ENCODE measurements at regions of chr3 and their contacts with region 1.

Region 1: GRCh38 chr3:102229062-102229655 is 205.7 kb upstream of the ZPLD1 start:
- DNase-seq: peak; percentile 87
- ATAC-seq: peak; percentile 53
- H3K4me3 ChIP-seq: no peak overlapping the region
- H3K4me3 Mint-ChIP-seq: no peak overlapping the region
- H3K27ac ChIP-seq: no peak overlapping the region
- H3K27ac Mint-ChIP-seq: no peak overlapping the region
- H3K4me1 ChIP-seq: peaks cover 22 to 28% of the 10 kb centered on the region in 2 donors
- H3K4me1 Mint-ChIP-seq: peaks cover 36% of the 10 kb centered on the region
- H3K27me3 ChIP-seq: no peaks in the 10 kb centered on the region
- H3K27me3 Mint-ChIP-seq: peaks cover 3% of the 10 kb centered on the region
- CTCF ChIP-seq: peak; percentile 90

Region 2: GRCh38 chr3:101803173-101803782 is 425.9 kb before region 1 on chr3:
- CTCF ChIA-PET with region 1: interaction called, 1,306 read pairs
- POLR2A ChIA-PET with region 1: no interaction called
- intact Hi-C with region 1: no loop called
- DNase-seq: peak; percentile 75
- ATAC-seq: peak; percentile 99
- H3K4me3 ChIP-seq: no peak overlapping the region
- H3K4me3 Mint-ChIP-seq: no peak overlapping the region
- H3K27ac ChIP-seq: no peak overlapping the region
- H3K27ac Mint-ChIP-seq: no peak overlapping the region
- H3K4me1 ChIP-seq: no peaks in the 10 kb centered on the region
- H3K4me1 Mint-ChIP-seq: peaks cover 4% of the 10 kb centered on the region
- H3K27me3 ChIP-seq: no peaks in the 10 kb centered on the region
- H3K27me3 Mint-ChIP-seq: no peaks in the 10 kb centered on the region
- CTCF ChIP-seq: peak; percentile 90

Region 3: DNA sequence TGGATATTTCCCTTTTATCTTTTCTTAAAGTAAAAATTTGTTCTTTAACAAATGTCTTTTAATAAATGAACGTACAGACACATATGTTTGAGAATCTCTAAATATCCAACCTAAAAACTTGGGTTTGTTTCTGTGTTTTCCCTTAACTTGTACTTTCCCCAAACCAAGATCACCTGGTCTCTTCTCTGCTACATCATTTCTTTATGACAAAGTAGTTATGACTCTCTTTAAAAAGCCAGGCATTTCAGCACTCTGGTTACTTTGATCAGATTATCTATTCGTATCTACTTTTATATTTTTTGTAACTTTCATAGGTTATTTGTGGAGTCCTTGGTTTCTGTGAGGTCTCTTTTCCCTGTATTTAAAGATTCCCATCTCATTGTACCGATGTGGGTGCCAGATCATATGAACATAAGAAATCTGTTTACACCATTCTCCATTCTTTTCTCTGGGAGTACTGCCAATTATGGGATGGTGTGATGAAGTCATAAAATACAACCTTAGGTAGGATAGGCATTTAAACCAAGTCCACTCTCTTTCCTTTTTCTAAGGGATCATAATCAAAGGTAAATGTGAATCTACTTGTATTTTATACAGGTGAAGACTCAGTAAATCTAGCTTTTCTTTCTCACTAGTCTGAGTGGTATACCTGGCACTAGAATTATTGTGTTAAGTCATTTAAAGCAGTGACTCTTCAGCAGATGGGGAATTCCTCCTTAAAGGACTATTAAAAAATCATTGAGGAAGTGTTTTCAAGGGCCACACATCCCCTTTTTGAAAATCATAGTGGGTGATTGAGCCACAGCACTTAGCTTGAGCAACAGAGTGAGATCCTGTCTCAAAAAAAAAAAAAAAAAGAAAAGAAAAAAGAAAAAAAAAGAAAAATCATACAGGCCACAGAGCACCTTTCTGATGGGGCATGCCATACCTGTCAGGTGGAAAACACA is 392.2 kb before region 1 on chr3:
- CTCF ChIA-PET with region 1: interaction called, 10 read pairs
- POLR2A ChIA-PET with region 1: no interaction called
- intact Hi-C with region 1: no loop called
- DNase-seq: peak; percentile 77
- ATAC-seq: peak; percentile 68
- H3K4me3 ChIP-seq: peak overlapping the region in 2 of 5 experiments; percentile 2 to 14
- H3K4me3 Mint-ChIP-seq: peak overlapping the region; percentile 73
- H3K27ac ChIP-seq: peak overlapping the region; percentile 19 to 49
- H3K27ac Mint-ChIP-seq: peak overlapping the region; percentile 28
- H3K4me1 ChIP-seq: peaks cover 55 to 59% of the 10 kb centered on the region in 2 donors
- H3K4me1 Mint-ChIP-seq: peaks cover 84% of the 10 kb centered on the region
- H3K27me3 ChIP-seq: no peaks in the 10 kb centered on the region
- H3K27me3 Mint-ChIP-seq: no peaks in the 10 kb centered on the region
- CTCF ChIP-seq: no peak

Region 4: DNA sequence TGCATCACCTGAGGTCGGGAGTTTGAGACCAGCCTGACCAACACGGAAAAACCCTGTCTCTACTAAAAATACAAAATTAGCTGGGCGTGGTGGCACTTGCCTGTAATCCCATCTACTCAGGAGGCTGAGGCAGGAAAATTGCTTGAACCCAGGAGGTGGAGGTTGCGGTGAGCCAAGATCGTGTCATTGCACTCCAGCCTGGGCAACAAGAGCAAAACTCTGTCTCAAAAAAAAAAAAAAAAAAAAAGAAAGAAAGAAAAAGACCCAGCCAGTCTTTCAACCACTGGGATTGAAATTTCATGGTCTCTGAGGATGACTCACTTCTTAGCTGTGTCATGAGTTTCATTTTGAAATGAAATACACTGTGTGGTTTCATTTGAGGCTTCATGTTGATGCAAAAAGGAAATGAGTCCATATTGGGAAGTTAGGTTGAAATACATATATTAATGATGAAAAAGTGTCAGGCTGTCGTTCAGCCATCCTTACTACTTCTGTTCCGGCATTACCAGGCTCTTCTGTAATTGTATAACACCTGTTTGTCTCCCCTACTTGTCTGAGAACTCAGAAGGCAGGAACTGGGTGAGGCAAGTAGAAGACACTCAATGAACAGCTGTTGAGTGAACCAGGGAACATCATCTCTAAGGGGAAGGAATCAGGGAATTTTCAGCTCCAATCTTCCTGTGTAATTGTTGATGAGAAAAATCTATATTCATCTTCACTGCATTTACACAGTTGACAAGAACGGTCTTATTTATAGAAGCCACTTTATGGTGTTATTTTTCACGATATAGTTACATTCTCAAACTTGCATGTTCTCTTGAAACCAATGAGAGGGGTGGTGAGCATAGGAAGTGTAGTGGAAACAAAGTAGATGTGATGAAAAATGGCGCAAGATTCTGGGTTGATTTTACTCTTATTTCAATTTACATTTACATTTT is 292.5 kb before region 1 on chr3:
- CTCF ChIA-PET with region 1: interaction called, 11 read pairs
- POLR2A ChIA-PET with region 1: no interaction called
- intact Hi-C with region 1: loop called (anchors 5 kb)
- DNase-seq: peak; percentile 82
- ATAC-seq: peak; percentile 86
- H3K4me3 ChIP-seq: peak overlapping the region in 2 of 5 experiments; percentile 24 to 32
- H3K4me3 Mint-ChIP-seq: peak overlapping the region; percentile 74
- H3K27ac ChIP-seq: peak overlapping the region; percentile 56
- H3K27ac Mint-ChIP-seq: peak overlapping the region; percentile 90
- H3K4me1 ChIP-seq: peaks cover 56 to 64% of the 10 kb centered on the region in 2 donors
- H3K4me1 Mint-ChIP-seq: peaks cover 33% of the 10 kb centered on the region
- H3K27me3 ChIP-seq: no peaks in the 10 kb centered on the region
- H3K27me3 Mint-ChIP-seq: no peaks in the 10 kb centered on the region
- CTCF ChIP-seq: no peak

Region 5: DNA sequence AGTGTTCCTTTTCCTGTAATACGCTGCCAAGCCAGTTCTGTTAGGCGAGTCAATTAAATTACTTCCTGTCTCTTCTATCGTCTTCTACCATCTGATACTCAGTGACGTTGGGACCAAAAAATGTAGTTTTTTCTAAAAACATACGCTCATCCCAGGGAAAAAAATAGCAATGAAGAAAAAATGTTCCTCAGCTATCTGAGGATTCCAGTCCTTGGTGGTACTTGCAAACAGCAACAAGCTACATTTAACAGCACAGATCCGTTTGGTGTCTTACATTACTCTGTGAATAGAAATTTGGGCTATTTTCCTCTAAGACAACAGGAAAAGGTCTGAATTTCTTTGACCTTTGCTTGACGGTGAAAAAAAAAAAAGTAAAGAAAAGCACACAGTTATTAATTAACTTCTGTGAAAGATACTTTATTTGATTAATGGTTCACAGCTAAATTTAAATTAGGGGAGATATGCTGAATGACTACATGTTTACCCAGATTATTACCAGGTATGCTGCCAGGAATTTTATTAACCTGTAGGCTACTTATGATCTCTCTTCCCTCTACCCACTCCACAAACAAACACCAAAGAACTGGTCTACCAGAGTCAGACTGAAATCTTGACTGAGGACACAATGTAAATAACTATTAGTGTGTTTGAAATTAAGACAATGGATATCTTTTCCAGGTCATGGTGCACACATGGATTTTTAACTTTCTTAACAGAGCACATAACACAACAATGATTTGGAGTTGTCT is 48.7 kb before region 1 on chr3:
- CTCF ChIA-PET with region 1: interaction called, 14 read pairs
- POLR2A ChIA-PET with region 1: no interaction called
- intact Hi-C with region 1: no loop called
- DNase-seq: peak; percentile 38
- ATAC-seq: no peak
- H3K4me3 ChIP-seq: peak overlapping the region in 4 of 5 experiments; percentile 6 to 53 (median 46)
- H3K4me3 Mint-ChIP-seq: no peak overlapping the region
- H3K27ac ChIP-seq: peak overlapping the region in 1 of 2 donors; percentile 40
- H3K27ac Mint-ChIP-seq: no peak overlapping the region
- H3K4me1 ChIP-seq: peaks cover 8 to 16% of the 10 kb centered on the region in 2 donors
- H3K4me1 Mint-ChIP-seq: peaks cover 12% of the 10 kb centered on the region
- H3K27me3 ChIP-seq: peaks cover 0 to 2% (median 0%) of the 10 kb centered on the region in 4 experiments
- H3K27me3 Mint-ChIP-seq: no peaks in the 10 kb centered on the region
- CTCF ChIP-seq: no peak

Region 6: GRCh38 chr3:102536456-102536855 is 307.3 kb after region 1 on chr3:
- CTCF ChIA-PET with region 1: interaction called, 253 read pairs
- POLR2A ChIA-PET with region 1: interaction called, 4 read pairs
- intact Hi-C with region 1: loop called (anchors 1 kb)
- DNase-seq: peak; percentile 50
- ATAC-seq: no peak
- H3K4me3 ChIP-seq: no peak overlapping the region
- H3K4me3 Mint-ChIP-seq: no peak overlapping the region
- H3K27ac ChIP-seq: no peak overlapping the region
- H3K27ac Mint-ChIP-seq: no peak overlapping the region
- H3K4me1 ChIP-seq: peaks cover 0 to 5% of the 10 kb centered on the region in 2 donors
- H3K4me1 Mint-ChIP-seq: peaks cover 5% of the 10 kb centered on the region
- H3K27me3 ChIP-seq: peaks cover 0 to 10% (median 5%) of the 10 kb centered on the region in 4 experiments
- H3K27me3 Mint-ChIP-seq: peaks cover 28% of the 10 kb centered on the region
- CTCF ChIP-seq: peak; percentile 54